Caco-2 (cell line): ENCODE measurements at regions of chr6 and their contacts with region 1.

Region 1: DNA sequence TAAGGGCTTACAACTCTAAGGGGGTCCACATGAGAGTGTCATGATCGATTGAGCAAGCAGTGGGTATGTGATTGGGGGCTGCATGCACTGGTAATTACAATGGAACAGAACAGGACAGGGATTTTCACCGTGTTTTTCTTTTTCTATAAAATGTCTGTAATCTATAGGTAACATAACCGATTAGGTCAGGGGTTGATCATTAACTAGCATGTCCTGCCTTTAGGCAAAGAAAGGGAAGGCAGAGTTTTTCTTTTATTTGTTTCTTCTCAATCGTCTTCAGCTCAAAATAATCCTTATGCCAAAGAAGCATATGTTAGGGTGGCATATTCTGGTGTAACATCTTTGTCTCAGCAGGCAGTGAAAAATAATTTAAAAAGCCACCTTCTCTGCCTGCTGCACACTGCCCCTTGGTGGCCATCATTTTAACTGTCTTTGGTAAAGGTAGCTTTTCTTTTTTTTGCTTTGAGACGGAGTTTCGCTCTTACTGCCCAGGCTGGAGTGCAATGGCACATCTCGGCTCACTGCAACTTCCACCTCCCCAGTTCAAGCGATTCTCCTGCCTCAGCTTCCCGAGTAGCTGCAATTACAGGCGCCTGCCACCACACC is 9.7 kb upstream of the CEP43 start:
- DNase-seq: no peak
- H3K4me3 ChIP-seq: no peak overlapping the region
- H3K4me3 Mint-ChIP-seq: no peak overlapping the region
- H3K27ac Mint-ChIP-seq: no peak overlapping the region
- H3K4me1 ChIP-seq: no peaks in the 10 kb centered on the region
- H3K4me1 Mint-ChIP-seq: no peaks in the 10 kb centered on the region
- H3K27me3 ChIP-seq: no peaks in the 10 kb centered on the region
- H3K27me3 Mint-ChIP-seq: no peaks in the 10 kb centered on the region
- CTCF ChIP-seq: peak; percentile 24 to 47

Region 2: GRCh38 chr6:166775180-166776081 is 214.1 kb before region 1 on chr6:
- CTCF ChIA-PET with region 1: interaction called, 29 read pairs
- POLR2A ChIA-PET with region 1: no interaction called
- intact Hi-C with region 1: loop called (anchors 1 kb)
- DNase-seq: peak in 1 of 2 experiments; percentile 63
- H3K4me3 ChIP-seq: no peak overlapping the region
- H3K4me3 Mint-ChIP-seq: peak overlapping the region; percentile 63
- H3K27ac Mint-ChIP-seq: no peak overlapping the region
- H3K4me1 ChIP-seq: no peaks in the 10 kb centered on the region
- H3K4me1 Mint-ChIP-seq: peaks cover 7% of the 10 kb centered on the region
- H3K27me3 ChIP-seq: no peaks in the 10 kb centered on the region
- H3K27me3 Mint-ChIP-seq: peaks cover 29% of the 10 kb centered on the region
- CTCF ChIP-seq: peak; percentile 84 to 89

Region 3: DNA sequence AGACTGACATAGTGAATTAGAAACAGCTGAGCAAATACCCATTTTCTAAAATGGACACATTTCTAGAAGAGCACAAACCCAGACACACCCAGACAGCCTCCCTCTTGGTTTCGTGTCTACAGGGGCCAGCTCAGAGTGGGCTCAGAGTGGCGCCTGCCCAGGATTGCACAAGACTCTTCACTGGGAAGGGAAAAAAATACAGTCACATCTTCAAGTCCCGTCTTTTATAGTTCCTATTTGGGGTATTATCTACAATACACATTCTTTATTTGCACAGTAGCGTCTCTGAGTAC is 591.0 kb after region 1 on chr6:
- CTCF ChIA-PET with region 1: no interaction called
- POLR2A ChIA-PET with region 1: no interaction called
- intact Hi-C with region 1: no loop called
- DNase-seq: no peak
- H3K4me3 ChIP-seq: no peak overlapping the region
- H3K4me3 Mint-ChIP-seq: no peak overlapping the region
- H3K27ac Mint-ChIP-seq: no peak overlapping the region
- H3K4me1 ChIP-seq: no peaks in the 10 kb centered on the region
- H3K4me1 Mint-ChIP-seq: peaks cover 12% of the 10 kb centered on the region
- H3K27me3 ChIP-seq: no peaks in the 10 kb centered on the region
- H3K27me3 Mint-ChIP-seq: no peaks in the 10 kb centered on the region
- CTCF ChIP-seq: no peak